Left colon (tissue), 2 donors: ENCODE measurements at regions of chrX and their contacts with region 1.

Region 1: DNA sequence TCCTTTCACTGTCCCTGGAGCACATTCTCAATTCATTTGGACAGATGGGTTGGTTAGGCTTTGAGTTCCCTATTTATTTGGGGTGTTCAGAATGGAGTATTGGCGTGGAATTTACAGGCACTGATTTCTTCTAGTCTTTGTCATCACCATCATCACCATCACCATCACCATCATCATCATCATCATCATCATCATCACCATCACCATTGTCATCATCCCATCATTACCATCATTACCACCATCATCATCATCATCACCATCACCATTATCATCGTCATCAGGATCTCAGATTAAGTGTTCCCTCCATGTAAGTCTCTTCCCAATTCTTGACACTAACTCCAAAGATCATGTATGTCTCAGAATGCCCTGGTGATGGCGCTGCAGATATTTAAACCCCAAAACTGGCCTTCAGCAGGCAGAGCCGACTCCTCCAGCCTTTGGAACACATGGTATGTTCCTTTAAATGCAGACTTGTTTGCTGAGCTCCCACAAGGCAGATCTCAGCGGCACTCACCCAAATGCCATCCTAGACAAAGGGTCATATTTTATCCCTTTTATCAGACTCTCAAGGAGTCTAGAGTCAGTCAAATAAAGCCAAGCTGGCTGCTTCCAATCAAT is 19.8 kb upstream of the FAM9A start:
- DNase-seq: no peak
- ATAC-seq: no peak

Region 2: GRCh38 chrX:9221781-9222180 is 400.8 kb after region 1 on chrX:
- intact Hi-C with region 1: no loop called
- DNase-seq: no peak
- ATAC-seq: no peak

Region 3: DNA sequence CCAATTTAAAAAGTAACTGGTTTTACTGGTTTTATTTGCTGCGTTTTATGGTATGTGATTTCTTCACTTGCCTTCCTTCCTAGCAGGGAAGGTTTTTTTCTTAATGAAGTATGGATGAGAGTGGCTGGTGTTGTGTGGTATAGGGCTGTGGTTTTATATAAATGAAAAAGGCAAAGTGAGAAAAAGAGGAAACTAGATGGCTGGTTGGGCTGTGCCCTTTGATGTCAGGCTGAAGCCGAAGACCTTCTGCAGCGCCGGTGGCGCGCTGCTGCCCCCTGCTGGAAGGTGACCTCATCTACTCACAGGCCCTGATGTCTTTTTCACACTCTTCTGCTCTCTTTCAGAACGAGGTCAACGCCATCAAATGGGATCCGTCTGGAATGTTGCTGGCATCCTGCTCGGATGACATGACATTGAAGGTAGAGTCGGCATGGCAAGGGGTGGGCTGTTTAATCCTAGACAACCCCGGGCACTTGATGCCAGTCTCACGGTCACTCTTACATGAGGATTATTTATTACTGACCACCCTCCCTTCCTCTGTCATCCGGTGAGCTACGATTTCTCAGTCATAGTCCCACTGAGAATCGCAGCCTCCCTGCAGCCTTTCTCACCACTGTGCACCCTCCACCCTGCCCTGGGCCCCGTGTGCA is 888.0 kb after region 1 on chrX:
- intact Hi-C with region 1: loop called in 1 of 2 experiments (anchors 10 kb)
- DNase-seq: peak; percentile 45 to 84
- ATAC-seq: peak; percentile 90